Right lobe of liver (tissue), 6 donors: ENCODE measurements at regions of chr14 and their contacts with region 1.

Region 1: DNA sequence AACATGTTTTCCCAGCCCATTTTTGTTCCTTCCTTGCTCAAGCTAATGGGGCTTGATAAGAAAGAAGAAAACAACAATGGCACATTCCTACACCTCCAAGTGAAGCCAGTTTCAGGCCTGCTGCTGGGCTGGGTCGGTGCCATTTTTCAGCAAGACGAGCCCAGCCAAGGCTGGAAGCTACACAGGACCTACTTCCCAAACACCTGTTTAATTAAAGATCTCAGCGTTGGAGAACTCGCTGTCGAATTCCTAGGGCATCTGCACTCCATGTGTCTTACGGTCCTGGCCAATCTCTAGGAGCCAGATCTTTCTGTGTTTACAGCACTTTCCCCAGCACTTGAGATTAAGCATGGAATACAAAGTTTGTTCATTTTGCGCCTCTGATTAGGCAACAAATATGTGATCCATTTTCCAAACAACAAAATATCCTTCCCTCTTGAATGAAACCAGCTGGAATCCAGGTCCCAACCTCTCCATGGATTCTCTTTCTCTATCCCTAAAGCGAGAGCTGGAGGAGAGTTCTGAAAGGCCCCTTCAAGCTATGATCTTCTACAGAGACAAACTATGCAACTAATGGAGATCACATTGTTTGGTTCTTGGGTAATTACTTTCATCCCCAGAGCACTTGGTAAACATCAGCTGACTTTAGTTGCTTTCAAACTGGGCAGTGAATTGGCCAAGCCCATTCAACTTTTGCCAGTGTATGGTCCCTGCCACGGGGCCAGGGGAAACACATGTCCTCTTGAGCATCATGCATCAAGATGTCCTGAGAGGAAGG is 34.3 kb upstream of the TC2N start:
- DNase-seq: no peak
- ATAC-seq: no peak
- H3K4me3 ChIP-seq: no peak overlapping the region
- H3K27ac ChIP-seq: no peak overlapping the region
- H3K4me1 ChIP-seq: peaks cover 0 to 29% (median 8%) of the 10 kb centered on the region in 4 donors
- H3K27me3 ChIP-seq: no peaks in the 10 kb centered on the region
- CTCF ChIP-seq: no peak
- POLR2A ChIP-seq: no peak

Region 2: DNA sequence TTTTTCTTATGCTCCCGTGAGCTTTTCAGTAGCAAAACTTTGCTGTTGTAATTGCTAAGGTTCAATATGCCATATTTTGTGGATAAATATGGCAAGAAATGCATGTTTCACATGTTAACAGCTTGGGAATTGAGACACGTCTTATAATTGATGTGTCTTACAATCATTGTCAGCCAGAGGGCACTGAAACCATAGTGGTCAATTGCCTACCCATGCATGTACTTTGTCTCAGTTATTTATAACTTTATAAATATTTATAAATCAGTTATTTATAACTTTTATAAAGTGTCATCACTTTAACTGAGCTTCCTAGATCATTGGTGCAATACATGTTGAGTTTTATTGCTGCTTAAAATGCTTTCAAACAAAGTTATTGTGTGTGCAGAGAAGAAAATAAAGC is 251.7 kb before region 1 on chr14:
- intact Hi-C with region 1: loop called in 1 of 2 experiments (anchors 10 kb)
- DNase-seq: no peak
- ATAC-seq: peak; percentile 63 to 81 (median 72)
- H3K4me3 ChIP-seq: no peak overlapping the region
- H3K27ac ChIP-seq: no peak overlapping the region
- H3K4me1 ChIP-seq: no peaks in the 10 kb centered on the region
- H3K27me3 ChIP-seq: no peaks in the 10 kb centered on the region
- CTCF ChIP-seq: peak; percentile 55 to 66 (median 61)
- POLR2A ChIP-seq: no peak

Region 3: GRCh38 chr14:91728616-91729183 is 172.9 kb before region 1 on chr14:
- intact Hi-C with region 1: no loop called
- DNase-seq: no peak
- ATAC-seq: no peak
- H3K4me3 ChIP-seq: no peak overlapping the region
- H3K27ac ChIP-seq: no peak overlapping the region
- H3K4me1 ChIP-seq: no peaks in the 10 kb centered on the region
- H3K27me3 ChIP-seq: no peaks in the 10 kb centered on the region
- CTCF ChIP-seq: no peak
- POLR2A ChIP-seq: no peak

Region 4: DNA sequence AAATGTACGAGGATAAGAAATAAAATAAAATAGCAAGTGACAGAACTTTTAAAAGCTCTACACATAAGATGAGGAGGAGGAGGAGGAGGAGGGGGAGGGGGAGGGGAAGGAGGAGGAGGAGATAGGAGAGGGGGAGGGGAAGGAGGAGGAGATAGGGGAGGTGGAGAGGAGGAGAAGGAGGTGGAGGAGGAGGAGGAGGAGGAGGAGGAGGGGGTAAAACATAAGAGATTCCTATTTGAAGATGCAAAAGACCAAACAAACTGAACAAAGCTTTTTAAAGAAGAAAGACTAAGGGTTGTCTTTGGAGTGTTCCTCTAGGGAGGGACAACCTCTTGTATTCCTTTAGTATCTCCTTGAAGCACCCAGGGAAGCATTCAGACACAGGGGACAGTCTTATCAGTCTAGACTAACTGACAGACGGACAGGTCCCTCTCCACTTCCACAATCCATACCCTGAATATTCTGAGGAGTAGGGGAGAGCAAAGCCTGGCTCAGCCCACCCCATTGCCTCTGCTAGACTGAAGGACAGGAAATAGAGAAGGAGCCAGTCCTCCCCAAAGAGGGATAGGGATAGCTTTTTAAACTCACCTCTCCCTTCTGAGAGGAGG is 47.2 kb before region 1 on chr14:
- intact Hi-C with region 1: no loop called
- DNase-seq: no peak
- ATAC-seq: no peak
- H3K4me3 ChIP-seq: no peak overlapping the region
- H3K27ac ChIP-seq: no peak overlapping the region
- H3K4me1 ChIP-seq: no peaks in the 10 kb centered on the region
- H3K27me3 ChIP-seq: no peaks in the 10 kb centered on the region
- CTCF ChIP-seq: no peak
- POLR2A ChIP-seq: no peak

Region 5: GRCh38 chr14:92026548-92027190 is 125.0 kb after region 1 on chr14:
- intact Hi-C with region 1: no loop called
- DNase-seq: no peak
- ATAC-seq: no peak
- H3K4me3 ChIP-seq: no peak overlapping the region
- H3K27ac ChIP-seq: no peak overlapping the region
- H3K4me1 ChIP-seq: no peaks in the 10 kb centered on the region
- H3K27me3 ChIP-seq: no peaks in the 10 kb centered on the region
- CTCF ChIP-seq: no peak
- POLR2A ChIP-seq: no peak

Region 6: DNA sequence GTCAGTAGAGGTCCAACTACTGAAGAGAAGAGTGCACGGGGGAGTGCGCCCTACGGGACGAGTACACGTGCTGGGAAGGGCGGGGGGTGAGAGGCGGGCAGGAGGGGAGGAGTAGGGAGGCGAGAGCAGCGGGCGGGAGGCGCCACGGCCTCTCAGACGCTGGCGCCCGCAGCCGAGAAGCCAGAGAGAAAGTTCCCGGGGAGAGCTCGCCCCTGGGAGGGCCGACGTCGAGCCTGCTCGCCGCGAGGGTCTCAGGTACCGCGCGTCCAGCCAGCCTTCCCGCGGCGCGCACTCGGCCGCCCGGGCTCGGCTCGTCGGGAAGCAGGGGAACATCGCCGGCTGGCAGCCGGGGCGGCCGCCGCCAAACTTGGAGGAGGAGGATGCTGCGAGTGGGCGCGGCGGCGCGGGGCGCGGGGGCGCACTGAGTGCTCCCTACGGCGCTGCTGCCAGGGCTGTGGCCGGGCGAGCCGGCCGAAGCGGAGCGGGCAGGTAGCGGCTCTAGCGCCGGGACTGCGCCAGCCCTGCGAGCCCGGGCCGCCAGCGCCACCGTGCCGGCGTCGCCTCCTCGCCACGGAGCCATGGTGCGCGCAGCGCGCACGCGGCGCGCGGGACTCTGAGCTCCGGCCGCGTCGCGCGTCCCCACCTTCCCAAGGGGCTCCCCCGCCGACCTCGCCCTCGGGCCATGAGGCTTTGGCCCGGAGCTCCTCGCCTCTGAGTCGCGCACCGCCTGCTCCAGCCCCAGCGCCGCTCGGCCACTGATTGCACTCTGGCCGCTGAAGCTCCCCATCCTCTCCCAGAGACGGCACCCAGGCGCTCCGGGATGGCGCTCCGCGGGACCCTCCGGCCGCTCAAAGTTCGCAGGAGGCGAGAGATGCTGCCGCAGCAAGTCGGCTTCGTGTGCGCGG is 421.6 kb after region 1 on chr14 and contains the start of gene SLC24A4:
- intact Hi-C with region 1: no loop called
- DNase-seq: no peak
- ATAC-seq: peak in 2 of 4 donors; percentile 21 to 65
- H3K4me3 ChIP-seq: peak within 1 kb of the TSS in 1 of 3 donors; percentile 27
- H3K27ac ChIP-seq: no peak within 1 kb of the TSS
- H3K4me1 ChIP-seq: peaks cover 0 to 6% (median 0%) of the 10 kb centered on the region in 4 donors
- H3K27me3 ChIP-seq: peaks cover 0 to 5% of the 10 kb centered on the region in 2 donors
- CTCF ChIP-seq: no peak
- POLR2A ChIP-seq: no peak
- total RNA-seq, gene SLC24A4: 0.06 to 0.29 (median 0.21) TPM